Activated naive CD4-positive, alpha-beta T cell treated with anti-CD3 and anti-CD28 coated beads for 36 hours (primary cell): ENCODE measurements at regions of chr5 and their contacts with region 1.

Region 1: GRCh38 chr5:109921735-109922380 is 232.1 kb downstream of the MAN2A1 start:
- DNase-seq: peak; percentile 84
- H3K4me3 Mint-ChIP-seq: peak overlapping the region; percentile 55
- H3K27ac Mint-ChIP-seq: peak overlapping the region; percentile 93
- H3K4me1 Mint-ChIP-seq: peaks cover 35% of the 10 kb centered on the region
- H3K27me3 Mint-ChIP-seq: no peaks in the 10 kb centered on the region

Region 2: DNA sequence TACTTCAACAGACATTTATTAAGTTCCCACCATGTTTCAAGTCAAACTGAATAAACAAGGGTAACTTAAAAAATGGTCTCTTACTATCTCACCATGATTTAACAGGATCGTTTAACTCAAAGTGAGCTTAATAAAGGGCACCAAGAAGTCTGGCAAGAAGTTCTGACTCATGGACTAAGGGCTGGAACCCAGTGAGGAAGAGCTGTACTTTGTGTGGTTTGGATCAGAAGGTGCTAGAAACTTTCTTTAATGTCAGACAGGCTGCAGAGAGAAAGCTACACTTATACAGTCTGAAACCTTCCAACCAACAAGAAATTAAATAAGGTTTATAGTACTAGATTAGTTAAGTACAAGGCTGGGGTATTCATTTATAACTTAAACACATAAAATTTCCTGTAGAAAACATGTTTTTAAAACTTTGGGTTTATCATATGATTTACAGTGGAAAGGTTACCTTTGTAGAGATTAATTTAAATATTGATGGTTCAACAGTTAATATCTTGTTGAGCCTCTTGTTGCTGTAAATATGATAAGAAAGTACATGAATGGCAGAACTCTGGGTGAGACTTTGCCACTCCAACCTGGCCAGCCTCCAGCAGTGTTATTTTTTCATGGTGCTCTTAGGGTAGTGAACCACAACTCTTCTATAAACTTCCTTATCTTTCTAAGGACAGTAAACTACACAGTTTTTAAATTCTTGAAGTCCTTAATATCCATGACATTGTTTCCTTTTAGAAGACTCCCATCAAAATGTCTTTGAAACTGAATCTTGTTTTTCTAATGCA is 69.3 kb before region 1 on chr5:
- CTCF ChIA-PET with region 1: no interaction called
- intact Hi-C with region 1: loop called (anchors 1 kb)
- DNase-seq: peak; percentile 30
- H3K4me3 Mint-ChIP-seq: no peak overlapping the region
- H3K27ac Mint-ChIP-seq: peak overlapping the region; percentile 54
- H3K4me1 Mint-ChIP-seq: peaks cover 75% of the 10 kb centered on the region
- H3K27me3 Mint-ChIP-seq: no peaks in the 10 kb centered on the region

Region 3: DNA sequence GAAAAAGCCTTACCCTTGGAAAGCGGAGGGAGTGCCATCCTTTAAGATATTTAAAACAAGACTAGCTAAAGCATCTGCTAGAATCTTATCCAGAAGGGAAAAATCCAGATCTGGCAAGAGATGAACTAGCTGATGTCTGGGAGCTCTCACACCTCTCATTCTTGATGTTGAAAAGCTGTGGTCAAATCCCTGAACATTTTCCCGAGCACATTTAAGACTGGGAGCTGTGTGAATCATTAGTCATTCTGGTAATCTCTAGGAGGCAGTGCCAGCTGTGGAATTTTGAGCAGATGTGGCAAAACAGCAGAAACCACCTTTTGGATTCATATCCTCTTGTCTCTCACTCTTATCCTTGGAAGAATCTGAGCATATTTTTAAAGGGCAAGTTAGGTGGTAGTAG is 14.1 kb before region 1 on chr5:
- CTCF ChIA-PET with region 1: interaction called, 3 read pairs
- intact Hi-C with region 1: loop called (anchors 1 kb)
- DNase-seq: no peak
- H3K4me3 Mint-ChIP-seq: no peak overlapping the region
- H3K27ac Mint-ChIP-seq: no peak overlapping the region
- H3K4me1 Mint-ChIP-seq: peaks cover 12% of the 10 kb centered on the region
- H3K27me3 Mint-ChIP-seq: no peaks in the 10 kb centered on the region

Region 4: GRCh38 chr5:109936996-109937395 is 15.1 kb after region 1 on chr5:
- CTCF ChIA-PET with region 1: interaction called, 4 read pairs
- intact Hi-C with region 1: loop called (anchors 1 kb)
- DNase-seq: peak; percentile 81
- H3K4me3 Mint-ChIP-seq: peak overlapping the region; percentile 17
- H3K27ac Mint-ChIP-seq: peak overlapping the region; percentile 80
- H3K4me1 Mint-ChIP-seq: peaks cover 29% of the 10 kb centered on the region
- H3K27me3 Mint-ChIP-seq: no peaks in the 10 kb centered on the region

Region 5: DNA sequence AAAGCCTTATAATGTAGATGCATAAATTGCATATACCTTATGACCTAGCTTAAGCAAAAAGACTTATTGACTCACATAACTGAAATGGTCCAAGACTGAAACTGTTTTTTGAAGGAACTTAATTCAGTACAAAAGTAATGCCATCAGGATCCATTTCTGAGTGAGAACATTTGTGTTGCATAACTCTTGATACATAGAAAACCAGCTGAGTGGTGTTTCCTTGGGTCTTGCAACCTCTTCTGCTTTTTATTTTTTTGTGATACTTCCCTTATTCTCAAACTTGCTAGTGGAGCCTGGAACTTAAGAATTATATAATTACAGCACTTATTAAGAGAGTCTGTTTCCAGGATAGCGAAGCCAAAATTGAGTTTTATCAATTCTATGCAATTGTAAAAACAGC is 39.9 kb after region 1 on chr5:
- CTCF ChIA-PET with region 1: no interaction called
- intact Hi-C with region 1: loop called (anchors 2 kb)
- DNase-seq: no peak
- H3K4me3 Mint-ChIP-seq: no peak overlapping the region
- H3K27ac Mint-ChIP-seq: no peak overlapping the region
- H3K4me1 Mint-ChIP-seq: peaks cover 27% of the 10 kb centered on the region
- H3K27me3 Mint-ChIP-seq: no peaks in the 10 kb centered on the region

Region 6: GRCh38 chr5:109982966-109983534 is 61.2 kb after region 1 on chr5:
- CTCF ChIA-PET with region 1: no interaction called
- intact Hi-C with region 1: no loop called
- DNase-seq: no peak
- H3K4me3 Mint-ChIP-seq: no peak overlapping the region
- H3K27ac Mint-ChIP-seq: no peak overlapping the region
- H3K4me1 Mint-ChIP-seq: no peaks in the 10 kb centered on the region
- H3K27me3 Mint-ChIP-seq: no peaks in the 10 kb centered on the region

Region 7: DNA sequence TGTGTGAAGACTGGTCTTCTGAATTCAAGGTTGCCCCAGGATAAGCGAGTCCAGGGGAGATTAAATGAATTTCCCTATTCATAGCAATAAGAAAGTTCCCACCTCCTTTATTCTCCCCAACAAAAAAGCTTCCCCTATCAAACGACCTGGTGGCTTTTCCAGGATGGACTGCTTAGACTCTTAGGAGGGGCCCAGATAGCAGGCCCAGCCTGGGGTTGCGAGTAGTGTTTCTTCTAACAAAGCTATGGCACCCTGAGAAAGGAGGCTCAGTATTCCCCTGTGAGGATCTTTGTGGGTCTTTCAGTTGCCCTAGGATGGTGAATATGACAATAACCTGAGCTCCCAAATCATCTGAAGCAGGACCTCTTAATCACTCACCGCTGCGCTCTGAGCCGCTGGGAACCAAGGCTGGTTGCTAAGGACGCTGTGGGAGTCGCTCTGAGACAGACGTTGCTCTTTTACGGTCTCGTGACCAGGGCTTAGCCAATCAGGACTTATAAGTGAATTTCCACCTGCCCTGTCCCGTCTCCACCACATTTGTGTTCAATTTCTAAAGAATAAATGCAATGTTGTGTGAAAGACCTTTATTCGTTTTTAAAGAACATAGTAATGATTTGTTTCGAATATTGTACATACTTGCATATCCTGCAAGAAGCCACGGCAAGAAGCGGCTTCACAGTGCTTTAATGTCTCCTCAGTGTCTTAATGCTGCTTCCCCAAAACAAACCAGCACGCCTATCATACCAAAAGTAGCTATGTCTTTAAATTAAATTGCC is 804.6 kb after region 1 on chr5 and contains the start of gene TMEM232:
- CTCF ChIA-PET with region 1: no interaction called
- intact Hi-C with region 1: loop called (anchors 5 kb)
- DNase-seq: peak; percentile 90
- H3K4me3 Mint-ChIP-seq: peak within 1 kb of the TSS; percentile 75
- H3K27ac Mint-ChIP-seq: no peak within 1 kb of the TSS
- H3K4me1 Mint-ChIP-seq: peaks cover 3% of the 10 kb centered on the region
- H3K27me3 Mint-ChIP-seq: no peaks in the 10 kb centered on the region
- total RNA-seq, gene TMEM232: 0.31 to 0.86 TPM